ENCODE measurements at regions of chr12 and their contacts with region 1.

Region 1: GRCh38 chr12:54191550-54192022 is 2.8 kb upstream of the SMUG1 start:
- DNase-seq: peak; percentile 85
- ATAC-seq: peak; percentile 74

Region 2: DNA sequence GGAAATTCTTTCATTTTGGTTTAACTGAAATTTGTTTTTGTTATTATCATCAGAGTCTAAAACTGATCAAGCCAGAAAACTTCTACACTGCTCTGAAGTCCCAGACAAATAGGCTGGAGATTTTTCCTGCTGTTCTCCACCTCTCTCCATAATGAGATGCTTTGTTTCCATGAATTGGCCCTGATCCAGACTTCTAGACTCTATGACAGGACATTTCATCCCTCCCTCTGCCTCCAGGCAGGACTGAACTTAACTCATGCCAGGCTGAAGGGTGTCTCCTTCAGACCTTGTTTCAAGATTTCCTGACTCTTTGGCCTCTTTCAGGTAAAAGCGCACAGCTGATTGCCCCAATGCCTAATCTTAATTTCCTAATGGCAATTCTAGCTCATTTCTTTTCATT is 322.1 kb before region 1 on chr12:
- intact Hi-C with region 1: no loop called
- DNase-seq: no peak
- ATAC-seq: no peak

Region 3: GRCh38 chr12:54005853-54006686 is 185.5 kb before region 1 on chr12:
- intact Hi-C with region 1: loop called (anchors 2 kb)
- DNase-seq: peak; percentile 93
- ATAC-seq: peak; percentile 96